ENCODE measurements at regions of chr16 and their contacts with region 1.

Region 1: GRCh38 chr16:10314811-10315210 is 71.0 kb upstream of the ATF7IP2 start:
- DNase-seq: no peak
- H3K4me3 Mint-ChIP-seq: no peak overlapping the region
- H3K27ac Mint-ChIP-seq: no peak overlapping the region
- H3K4me1 Mint-ChIP-seq: peaks cover 17% of the 10 kb centered on the region
- H3K27me3 Mint-ChIP-seq: no peaks in the 10 kb centered on the region

Region 2: DNA sequence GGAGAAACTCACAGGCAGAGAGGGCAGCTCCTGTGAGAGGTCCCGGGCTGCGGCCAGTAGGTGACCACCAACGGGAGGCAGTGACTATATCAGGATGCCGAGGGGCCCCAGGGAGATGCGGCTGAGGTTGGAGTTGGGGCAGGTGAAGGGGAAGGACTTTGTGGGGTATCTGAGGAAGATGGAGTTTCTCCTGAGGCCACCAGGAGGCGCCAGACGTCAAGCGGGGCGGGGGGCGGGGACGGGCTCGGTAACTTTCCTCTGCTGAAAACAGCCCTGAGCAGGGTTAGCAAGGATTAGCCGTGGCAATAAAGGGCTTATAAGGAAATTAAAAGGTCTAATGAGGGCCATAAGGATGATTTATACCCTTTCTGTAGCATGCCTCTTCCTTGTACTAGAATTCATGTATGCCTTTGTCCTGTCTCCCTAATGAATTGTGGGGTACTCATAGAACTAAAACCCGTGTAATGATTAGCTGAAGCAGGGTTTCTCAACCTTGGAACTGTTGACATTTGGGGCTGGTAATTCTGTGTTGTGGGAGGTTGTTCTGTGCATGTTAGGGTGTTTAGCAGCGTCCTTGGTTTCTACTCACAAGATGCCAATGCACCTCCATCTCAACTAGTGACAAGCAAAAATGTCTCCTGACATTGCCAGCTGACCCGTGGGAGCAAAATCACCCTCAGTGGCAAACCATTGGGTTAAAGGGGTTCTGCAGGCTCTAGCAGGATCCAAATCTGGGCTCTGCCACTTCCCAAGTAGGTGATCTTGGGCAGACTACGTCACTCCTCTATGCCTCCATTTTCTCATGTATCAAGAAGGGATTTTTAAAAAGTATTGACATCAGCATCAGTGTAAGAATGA is 57.8 kb before region 1 on chr16:
- intact Hi-C with region 1: loop called (anchors 5 kb)
- DNase-seq: peak; percentile 6
- H3K4me3 Mint-ChIP-seq: no peak overlapping the region
- H3K27ac Mint-ChIP-seq: no peak overlapping the region
- H3K4me1 Mint-ChIP-seq: no peaks in the 10 kb centered on the region
- H3K27me3 Mint-ChIP-seq: no peaks in the 10 kb centered on the region

Region 3: DNA sequence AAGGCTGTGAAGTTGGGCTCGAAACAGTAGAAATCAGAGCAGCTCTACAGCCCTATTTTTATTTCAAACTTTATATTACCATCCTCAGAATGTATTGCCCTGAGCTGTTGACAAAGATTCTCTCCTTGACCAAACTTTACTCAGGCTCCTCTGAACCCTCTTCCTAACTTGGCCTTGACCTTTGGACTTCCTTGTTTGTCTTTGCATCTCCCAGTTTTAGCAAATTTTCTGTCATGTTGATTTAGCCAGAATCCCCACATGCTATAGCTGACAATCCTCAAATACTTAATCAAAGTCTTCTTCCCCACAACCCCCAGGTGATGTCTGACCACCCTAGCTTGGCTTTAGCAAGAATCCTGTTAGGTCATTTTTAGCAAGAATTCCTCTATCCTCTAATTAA is 45.2 kb before region 1 on chr16:
- intact Hi-C with region 1: no loop called
- DNase-seq: no peak
- H3K4me3 Mint-ChIP-seq: no peak overlapping the region
- H3K27ac Mint-ChIP-seq: no peak overlapping the region
- H3K4me1 Mint-ChIP-seq: peaks cover 6% of the 10 kb centered on the region
- H3K27me3 Mint-ChIP-seq: no peaks in the 10 kb centered on the region

Region 4: DNA sequence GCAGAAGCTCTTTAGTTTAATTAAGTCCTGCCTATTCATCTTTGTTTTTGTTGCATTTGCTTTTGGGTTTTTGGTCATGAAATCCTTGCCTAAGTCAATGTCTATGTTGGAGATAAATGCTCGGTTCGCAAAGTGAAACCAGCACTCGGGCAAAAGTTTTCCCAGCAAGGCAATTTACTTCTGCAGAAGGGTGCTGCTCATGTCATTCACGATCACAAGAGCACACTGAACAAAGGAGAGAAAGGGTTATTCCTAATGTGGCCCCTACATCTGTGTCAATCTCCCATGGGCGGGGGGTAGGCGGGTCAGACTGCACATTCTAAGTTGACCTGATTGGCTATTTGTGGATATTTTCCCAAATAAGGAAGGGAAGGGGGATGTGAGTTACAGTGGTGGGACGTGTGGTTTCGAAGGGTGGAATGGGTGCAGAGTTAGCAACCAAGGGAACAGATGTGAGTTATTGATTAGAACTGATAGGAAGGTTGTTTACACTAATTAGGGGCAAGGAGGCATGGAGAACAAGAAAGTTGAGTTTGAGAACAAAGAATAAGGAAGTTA is 94.1 kb after region 1 on chr16:
- intact Hi-C with region 1: no loop called
- DNase-seq: no peak
- H3K4me3 Mint-ChIP-seq: no peak overlapping the region
- H3K27ac Mint-ChIP-seq: no peak overlapping the region
- H3K4me1 Mint-ChIP-seq: no peaks in the 10 kb centered on the region
- H3K27me3 Mint-ChIP-seq: no peaks in the 10 kb centered on the region

Region 5: GRCh38 chr16:10509534-10510025 is 194.8 kb after region 1 on chr16:
- intact Hi-C with region 1: loop called (anchors 1 kb)
- DNase-seq: peak; percentile 49
- H3K4me3 Mint-ChIP-seq: no peak overlapping the region
- H3K27ac Mint-ChIP-seq: peak overlapping the region; percentile 64
- H3K4me1 Mint-ChIP-seq: peaks cover 11% of the 10 kb centered on the region
- H3K27me3 Mint-ChIP-seq: peaks cover 14% of the 10 kb centered on the region

Region 6: GRCh38 chr16:10708969-10709368 is 394.2 kb after region 1 on chr16:
- intact Hi-C with region 1: loop called (anchors 5 kb)
- DNase-seq: no peak
- H3K4me3 Mint-ChIP-seq: no peak overlapping the region
- H3K27ac Mint-ChIP-seq: no peak overlapping the region
- H3K4me1 Mint-ChIP-seq: no peaks in the 10 kb centered on the region
- H3K27me3 Mint-ChIP-seq: no peaks in the 10 kb centered on the region